Brain microvascular endothelial cell (primary cell): ENCODE measurements at regions of chr14 and their contacts with region 1.

Region 1: GRCh38 chr14:91286530-91286937 is 42.0 kb upstream of the GPR68 start:
- DNase-seq: peak; percentile 74
- H3K4me3 ChIP-seq: no peak overlapping the region
- H3K27ac ChIP-seq: no peak overlapping the region
- H3K27me3 ChIP-seq: no peaks in the 10 kb centered on the region
- CTCF ChIP-seq: peak; percentile 89

Region 2: DNA sequence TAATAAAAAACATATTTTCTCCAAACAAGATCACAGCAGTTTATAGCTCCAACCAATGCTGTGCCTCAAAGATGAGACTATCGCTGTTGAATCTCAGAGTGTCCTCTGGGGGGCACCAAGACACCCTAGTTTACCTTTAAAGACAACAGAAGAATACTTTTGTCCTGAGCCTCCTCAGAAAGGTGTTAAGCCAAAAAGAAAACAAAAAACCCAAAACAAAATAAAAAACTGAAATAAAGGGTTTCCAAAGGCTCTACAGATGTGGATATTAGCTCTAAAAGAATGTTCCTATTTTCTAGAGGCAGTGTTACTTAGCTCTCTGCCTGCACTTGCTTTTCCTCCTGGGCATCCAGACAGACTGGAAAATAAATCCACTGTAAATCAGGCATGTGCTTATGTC is 383.4 kb before region 1 on chr14:
- in situ Hi-C with region 1: loop called (anchors 25 kb)
- DNase-seq: peak; percentile 55
- H3K4me3 ChIP-seq: no peak overlapping the region
- H3K27ac ChIP-seq: no peak overlapping the region
- H3K27me3 ChIP-seq: no peaks in the 10 kb centered on the region
- CTCF ChIP-seq: peak; percentile 79

Region 3: GRCh38 chr14:91177073-91178034 is 109.2 kb before region 1 on chr14:
- in situ Hi-C with region 1: loop called (anchors 25 kb)
- DNase-seq: peak; percentile 69
- H3K4me3 ChIP-seq: no peak overlapping the region
- H3K27ac ChIP-seq: no peak overlapping the region
- H3K27me3 ChIP-seq: no peaks in the 10 kb centered on the region
- CTCF ChIP-seq: peak; percentile 85